ENCODE measurements at regions of chr12 and their contacts with region 1.

Region 1: GRCh38 chr12:26853303-26854030 is 20.5 kb upstream of the ITPR2 start:
- DNase-seq: peak; percentile 73
- CTCF ChIP-seq: peak; percentile 87

Region 2: DNA sequence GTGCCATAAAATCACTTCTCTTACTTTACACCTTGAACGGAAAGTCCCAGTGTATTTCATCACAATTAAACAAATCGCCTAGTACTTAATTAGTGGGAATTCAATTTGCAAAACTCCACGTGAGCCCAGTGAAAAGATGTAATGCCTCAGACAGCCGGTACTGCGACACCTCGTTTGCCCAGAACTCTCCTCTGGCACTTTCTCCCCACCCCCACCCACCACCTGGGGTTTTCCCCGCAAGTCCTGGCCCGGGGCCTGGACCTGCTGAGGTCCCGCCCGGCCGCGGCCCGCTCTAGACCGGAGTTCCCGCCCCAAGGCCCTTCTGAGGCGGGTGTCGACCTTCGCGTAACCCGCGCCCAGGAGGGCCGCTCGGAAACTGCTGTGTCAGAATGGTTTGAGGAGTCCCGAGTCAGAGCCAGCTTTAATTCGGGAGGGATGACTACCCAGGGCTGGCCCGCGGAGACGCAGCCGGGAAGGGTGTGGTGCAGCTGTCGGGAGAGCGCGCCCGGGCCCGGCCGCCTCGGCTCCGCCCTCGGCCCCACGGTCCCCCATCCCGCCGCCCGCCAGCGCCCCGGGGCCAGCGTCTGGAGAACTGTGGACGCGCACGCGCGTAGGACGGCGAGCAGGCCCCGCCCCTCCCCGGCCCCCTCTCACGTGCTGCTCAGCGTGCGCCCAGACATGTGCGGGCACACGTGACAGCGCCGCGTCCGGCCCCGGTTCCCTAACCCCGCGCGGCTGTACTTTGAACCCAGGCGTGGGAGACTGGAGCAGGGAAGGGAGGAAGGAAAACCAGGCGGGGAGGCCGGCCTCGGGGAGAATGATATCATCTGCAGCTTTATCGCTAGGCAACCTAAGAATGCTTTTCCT is 739.4 kb before region 1 on chr12:
- in situ Hi-C with region 1: loop called (anchors 25 kb)
- DNase-seq: peak; percentile 89
- CTCF ChIP-seq: no peak

Region 3: GRCh38 chr12:26402648-26403047 is 450.8 kb before region 1 on chr12:
- in situ Hi-C with region 1: no loop called
- DNase-seq: no peak
- CTCF ChIP-seq: no peak

Measured in GM13976 (cell line).